ENCODE measurements at regions of chr22 and their contacts with region 1.

Region 1: GRCh38 chr22:22463855-22464540 is 44.5 kb downstream of the ZNF280B start:
- DNase-seq: peak; percentile 97 to 99 (median 99)
- ATAC-seq: peak; percentile 97
- H3K4me3 ChIP-seq: no peak overlapping the region
- H3K27ac ChIP-seq: no peak overlapping the region
- H3K4me1 ChIP-seq: peaks cover 0 to 2% of the 10 kb centered on the region in 2 experiments; a peak in 1 of 5 replicates
- H3K27me3 ChIP-seq: peaks cover 13 to 18% of the 10 kb centered on the region in 2 experiments; a peak in 4 of 5 replicates
- CTCF ChIP-seq: peak in 2 of 3 experiments; percentile 100; a peak in 4 of 6 replicates
- EP300 ChIP-seq: no peak; the same call in 1 of the 2 replicates
- POLR2A ChIP-seq: no peak
- RAD21 ChIP-seq: peak in 1 of 2 experiments; percentile 100; a peak in 2 of 4 replicates

Region 2: GRCh38 chr22:22357024-22357883 is 106.7 kb before region 1 on chr22:
- CTCF ChIA-PET with region 1: no interaction called
- POLR2A ChIA-PET with region 1: no interaction called
- in situ Hi-C with region 1: no loop called
- intact Hi-C with region 1: loop called (anchors 1 kb)
- DNase-seq: peak; percentile 99 to 100 (median 100)
- ATAC-seq: peak; percentile 99
- H3K4me3 ChIP-seq: no peak overlapping the region
- H3K27ac ChIP-seq: no peak overlapping the region
- H3K4me1 ChIP-seq: peaks cover 0 to 5% of the 10 kb centered on the region in 2 experiments; a peak in 1 of 5 replicates
- H3K27me3 ChIP-seq: peaks cover 11 to 20% of the 10 kb centered on the region in 2 experiments; a peak in 3 of 5 replicates
- CTCF ChIP-seq: peak; percentile 98 to 100 (median 99)
- EP300 ChIP-seq: peak; percentile 74
- POLR2A ChIP-seq: no peak
- RAD21 ChIP-seq: peak in 1 of 2 experiments; percentile 98; a peak in 3 of 4 replicates

Region 3: GRCh38 chr22:22474733-22475132 is 10.7 kb after region 1 on chr22:
- CTCF ChIA-PET with region 1: interaction called, 9 read pairs
- POLR2A ChIA-PET with region 1: interaction called, 13 read pairs
- in situ Hi-C with region 1: no loop called
- intact Hi-C with region 1: no loop called
- DNase-seq: peak in 2 of 4 experiments; percentile 46 to 47
- ATAC-seq: peak; percentile 61
- H3K4me3 ChIP-seq: no peak overlapping the region
- H3K27ac ChIP-seq: no peak overlapping the region
- H3K4me1 ChIP-seq: peaks cover 0 to 7% of the 10 kb centered on the region in 2 experiments; a peak in 2 of 5 replicates
- H3K27me3 ChIP-seq: peaks cover 9 to 18% of the 10 kb centered on the region in 2 experiments
- CTCF ChIP-seq: no peak
- EP300 ChIP-seq: no peak
- POLR2A ChIP-seq: no peak
- RAD21 ChIP-seq: no peak

Region 4: DNA sequence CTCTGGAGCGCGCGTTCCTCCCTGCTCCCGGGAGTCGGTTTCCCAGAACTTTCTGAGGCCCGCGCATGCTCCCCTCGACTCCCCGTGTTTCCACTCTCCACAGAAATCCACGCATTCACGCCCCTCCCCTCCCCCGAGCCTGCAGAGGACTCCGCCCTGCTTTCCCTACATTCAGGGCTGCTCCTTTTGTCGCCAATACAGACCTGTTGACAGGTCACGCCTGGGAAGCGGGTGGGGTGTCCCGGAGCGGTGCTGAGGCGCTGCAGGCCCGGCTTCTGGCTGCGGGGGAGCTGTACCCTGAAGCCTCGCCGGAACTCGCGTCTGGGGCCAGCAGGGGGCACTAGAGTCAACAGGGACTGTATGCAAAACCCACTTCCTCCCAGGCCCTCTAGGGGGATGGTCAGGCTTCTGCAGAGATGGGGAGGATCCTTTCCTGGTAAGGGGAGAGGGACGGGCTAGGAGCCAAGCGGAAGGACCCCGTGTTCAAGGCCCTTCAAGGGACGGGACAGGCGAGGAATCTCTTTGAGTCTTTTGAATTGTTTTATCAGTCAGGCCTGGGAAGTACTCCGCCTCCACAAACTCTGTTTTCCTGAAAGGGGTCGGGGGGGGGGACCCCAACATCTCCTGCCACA is 95.1 kb after region 1 on chr22 and contains the start of gene PRAME:
- CTCF ChIA-PET with region 1: interaction called, 65 read pairs
- POLR2A ChIA-PET with region 1: interaction called, 13 read pairs
- in situ Hi-C with region 1: no loop called
- intact Hi-C with region 1: loop called (anchors 1 kb)
- DNase-seq: peak; percentile 100
- ATAC-seq: peak; percentile 92
- H3K4me3 ChIP-seq: peak within 1 kb of the TSS; percentile 54
- H3K27ac ChIP-seq: peak within 1 kb of the TSS; percentile 78
- H3K4me1 ChIP-seq: peaks cover 39 to 43% of the 10 kb centered on the region in 2 experiments
- H3K27me3 ChIP-seq: no peaks in the 10 kb centered on the region; a peak in 1 of 5 replicates
- CTCF ChIP-seq: no peak
- EP300 ChIP-seq: no peak
- POLR2A ChIP-seq: no peak
- RAD21 ChIP-seq: no peak
- polyA plus RNA-seq, gene PRAME: 662 to 1,142 TPM

Region 5: DNA sequence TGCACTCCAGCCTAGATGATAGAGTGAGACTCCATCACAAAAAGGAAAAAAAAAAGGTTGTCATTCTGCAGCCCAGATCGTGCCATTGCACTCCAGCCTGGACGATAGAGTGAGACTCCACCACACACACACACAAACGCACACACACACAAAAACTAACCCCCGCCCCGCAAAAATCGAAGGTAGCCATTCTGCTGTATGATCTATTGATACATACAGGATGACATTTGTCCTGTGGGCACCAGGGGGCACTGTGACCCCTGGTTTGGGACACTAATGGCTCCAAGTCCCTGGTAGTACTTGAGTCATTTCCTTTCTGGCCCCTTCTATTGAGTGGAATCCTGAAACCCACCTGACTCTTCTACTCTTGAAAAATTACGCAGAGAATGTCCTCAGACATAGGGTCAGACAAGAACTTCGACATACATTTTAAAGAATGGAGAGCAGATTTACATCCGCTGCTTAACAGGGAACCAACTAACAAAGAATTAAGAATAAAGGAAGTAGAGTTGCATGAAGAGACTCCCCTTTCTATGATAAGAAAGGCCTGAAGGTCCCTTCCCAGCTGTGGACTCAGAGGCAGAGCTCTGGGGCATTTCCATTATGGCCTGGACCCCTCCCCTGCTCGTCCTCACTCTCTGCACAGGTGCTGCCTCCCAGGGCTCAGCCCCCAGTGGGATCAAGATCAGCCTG is 130.1 kb after region 1 on chr22:
- CTCF ChIA-PET with region 1: interaction called, 25 read pairs
- POLR2A ChIA-PET with region 1: interaction called, 4 read pairs
- in situ Hi-C with region 1: no loop called
- intact Hi-C with region 1: no loop called
- DNase-seq: peak; percentile 94 to 100 (median 98)
- ATAC-seq: peak; percentile 95
- H3K4me3 ChIP-seq: no peak overlapping the region
- H3K27ac ChIP-seq: no peak overlapping the region
- H3K4me1 ChIP-seq: no peaks in the 10 kb centered on the region
- H3K27me3 ChIP-seq: peaks cover 31 to 47% of the 10 kb centered on the region in 2 experiments; a peak in 4 of 5 replicates
- CTCF ChIP-seq: no peak
- EP300 ChIP-seq: no peak
- POLR2A ChIP-seq: no peak
- RAD21 ChIP-seq: no peak

Region 6: GRCh38 chr22:22710719-22711531 is 246.9 kb after region 1 on chr22:
- CTCF ChIA-PET with region 1: interaction called, 41 read pairs
- POLR2A ChIA-PET with region 1: interaction called, 5 read pairs
- in situ Hi-C with region 1: no loop called
- intact Hi-C with region 1: loop called (anchors 2 kb)
- DNase-seq: peak; percentile 93 to 100 (median 99)
- ATAC-seq: peak; percentile 88
- H3K4me3 ChIP-seq: no peak overlapping the region
- H3K27ac ChIP-seq: no peak overlapping the region
- H3K4me1 ChIP-seq: no peaks in the 10 kb centered on the region
- H3K27me3 ChIP-seq: peaks cover 3 to 20% of the 10 kb centered on the region in 2 experiments; a peak in 2 of 5 replicates
- CTCF ChIP-seq: no peak
- EP300 ChIP-seq: no peak
- POLR2A ChIP-seq: no peak
- RAD21 ChIP-seq: no peak

Region 7: GRCh38 chr22:22942511-22943329 is 478.7 kb after region 1 on chr22:
- CTCF ChIA-PET with region 1: no interaction called
- POLR2A ChIA-PET with region 1: no interaction called
- in situ Hi-C with region 1: no loop called
- intact Hi-C with region 1: loop called (anchors 5 kb)
- DNase-seq: peak; percentile 99 to 100 (median 100)
- ATAC-seq: peak; percentile 94
- H3K4me3 ChIP-seq: no peak overlapping the region
- H3K27ac ChIP-seq: no peak overlapping the region
- H3K4me1 ChIP-seq: peaks cover 0 to 3% of the 10 kb centered on the region in 2 experiments; a peak in 1 of 5 replicates
- H3K27me3 ChIP-seq: peaks cover 19 to 38% of the 10 kb centered on the region in 2 experiments; a peak in 4 of 5 replicates
- CTCF ChIP-seq: no peak
- EP300 ChIP-seq: no peak
- POLR2A ChIP-seq: no peak
- RAD21 ChIP-seq: no peak

Measured in K562 (cell line).